Right lobe of liver (tissue), 6 donors: ENCODE measurements at regions of chr20 and their contacts with region 1.

Region 1: GRCh38 chr20:32678948-32679347 is 5.2 kb upstream of the C20orf203 start:
- DNase-seq: peak; percentile 90 to 93 (median 91)
- ATAC-seq: peak; percentile 91 to 96 (median 94)
- H3K4me3 ChIP-seq: no peak overlapping the region
- H3K27ac ChIP-seq: no peak overlapping the region
- H3K4me1 ChIP-seq: peaks cover 0 to 5% (median 0%) of the 10 kb centered on the region in 4 donors
- H3K27me3 ChIP-seq: no peaks in the 10 kb centered on the region
- CTCF ChIP-seq: no peak
- POLR2A ChIP-seq: no peak

Region 2: DNA sequence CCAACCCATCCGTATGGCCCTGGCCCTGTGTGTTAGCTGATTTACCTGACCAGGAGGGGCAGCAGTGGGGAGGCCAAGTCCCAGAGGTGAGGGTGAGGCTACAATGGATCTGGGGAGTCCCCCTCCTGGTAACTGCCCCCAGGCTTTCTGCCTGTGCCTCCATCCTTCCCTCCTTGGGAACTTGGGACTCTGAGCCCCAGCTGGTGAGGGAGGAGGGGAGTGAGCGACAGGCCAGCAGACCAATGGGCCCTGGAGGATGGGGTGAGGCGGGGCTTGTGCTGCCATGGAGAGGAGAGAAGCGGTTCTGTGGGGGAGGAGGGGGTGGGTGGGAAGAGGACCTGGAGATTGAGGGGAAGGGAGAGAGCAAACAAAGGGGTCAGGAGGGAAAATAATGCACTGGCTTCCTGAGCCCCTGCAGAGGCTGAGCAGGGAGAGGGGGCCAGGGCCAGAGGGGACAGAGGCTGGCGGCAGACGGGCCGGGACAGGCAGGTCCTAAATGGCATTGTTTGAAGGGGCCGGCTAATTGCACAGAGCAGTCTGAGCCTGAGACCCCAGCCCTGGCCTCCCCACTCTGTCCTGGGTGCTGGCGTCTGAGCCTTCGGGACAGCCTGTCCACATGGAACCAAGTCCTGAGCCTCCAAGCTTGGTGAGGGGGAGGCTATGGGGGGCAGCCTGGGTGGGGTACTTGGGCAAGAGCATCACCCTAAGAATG is 100.7 kb after region 1 on chr20:
- intact Hi-C with region 1: loop called (anchors 5 kb)
- DNase-seq: no peak
- ATAC-seq: no peak
- H3K4me3 ChIP-seq: no peak overlapping the region
- H3K27ac ChIP-seq: no peak overlapping the region
- H3K4me1 ChIP-seq: peaks cover 0 to 19% (median 6%) of the 10 kb centered on the region in 4 donors
- H3K27me3 ChIP-seq: no peaks in the 10 kb centered on the region
- CTCF ChIP-seq: no peak
- POLR2A ChIP-seq: no peak